CD8-positive, alpha-beta T cell (primary cell): ENCODE measurements at regions of chr7 and their contacts with region 1.

Region 1: DNA sequence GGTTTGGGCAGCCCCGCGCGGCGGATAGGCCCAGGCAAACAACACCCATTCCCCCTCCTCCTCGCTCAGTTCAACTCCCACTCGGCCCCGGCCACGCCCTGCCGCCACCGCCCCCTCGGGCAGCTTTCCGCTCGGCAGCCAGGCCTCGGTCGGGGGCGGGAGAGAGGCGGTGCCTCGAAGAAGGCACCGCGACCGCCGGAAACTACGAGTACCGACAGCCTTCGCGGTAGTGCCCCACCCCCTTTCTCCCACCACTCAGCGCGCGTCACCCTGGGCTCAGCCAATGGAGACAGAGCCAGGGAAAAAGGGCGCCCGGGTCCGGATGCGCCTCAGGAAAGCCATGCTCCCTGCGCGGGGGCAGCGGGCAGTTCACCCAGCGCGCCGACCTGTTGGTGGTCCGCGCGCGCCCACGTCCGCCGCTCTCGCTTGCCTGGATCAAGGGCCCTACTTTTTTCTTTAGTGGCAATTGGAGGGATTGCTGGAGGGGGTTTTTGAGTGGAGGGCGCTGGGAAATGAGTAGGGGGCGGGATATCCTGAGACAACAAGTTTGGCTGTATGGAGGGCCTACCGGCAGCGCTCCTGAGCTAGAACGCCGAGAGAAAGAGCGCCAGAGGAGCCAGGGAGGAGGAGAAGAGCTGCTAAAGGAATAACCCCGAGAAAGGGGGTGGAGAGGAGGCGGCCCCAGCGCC is 557 bp upstream of the SP4 start:
- DNase-seq: peak; percentile 99 to 100 (median 99)
- ATAC-seq: peak; percentile 76
- H3K4me3 ChIP-seq: peak overlapping the region; percentile 87 to 99
- H3K4me3 Mint-ChIP-seq: peak overlapping the region; percentile 96
- H3K27ac ChIP-seq: peak overlapping the region; percentile 96 to 97
- H3K27ac Mint-ChIP-seq: peak overlapping the region; percentile 98
- H3K4me1 ChIP-seq: peaks cover 42% of the 10 kb centered on the region
- H3K4me1 Mint-ChIP-seq: peaks cover 48% of the 10 kb centered on the region
- H3K27me3 ChIP-seq: no peaks in the 10 kb centered on the region
- H3K27me3 Mint-ChIP-seq: no peaks in the 10 kb centered on the region
- CTCF ChIP-seq: no peak

Region 2: DNA sequence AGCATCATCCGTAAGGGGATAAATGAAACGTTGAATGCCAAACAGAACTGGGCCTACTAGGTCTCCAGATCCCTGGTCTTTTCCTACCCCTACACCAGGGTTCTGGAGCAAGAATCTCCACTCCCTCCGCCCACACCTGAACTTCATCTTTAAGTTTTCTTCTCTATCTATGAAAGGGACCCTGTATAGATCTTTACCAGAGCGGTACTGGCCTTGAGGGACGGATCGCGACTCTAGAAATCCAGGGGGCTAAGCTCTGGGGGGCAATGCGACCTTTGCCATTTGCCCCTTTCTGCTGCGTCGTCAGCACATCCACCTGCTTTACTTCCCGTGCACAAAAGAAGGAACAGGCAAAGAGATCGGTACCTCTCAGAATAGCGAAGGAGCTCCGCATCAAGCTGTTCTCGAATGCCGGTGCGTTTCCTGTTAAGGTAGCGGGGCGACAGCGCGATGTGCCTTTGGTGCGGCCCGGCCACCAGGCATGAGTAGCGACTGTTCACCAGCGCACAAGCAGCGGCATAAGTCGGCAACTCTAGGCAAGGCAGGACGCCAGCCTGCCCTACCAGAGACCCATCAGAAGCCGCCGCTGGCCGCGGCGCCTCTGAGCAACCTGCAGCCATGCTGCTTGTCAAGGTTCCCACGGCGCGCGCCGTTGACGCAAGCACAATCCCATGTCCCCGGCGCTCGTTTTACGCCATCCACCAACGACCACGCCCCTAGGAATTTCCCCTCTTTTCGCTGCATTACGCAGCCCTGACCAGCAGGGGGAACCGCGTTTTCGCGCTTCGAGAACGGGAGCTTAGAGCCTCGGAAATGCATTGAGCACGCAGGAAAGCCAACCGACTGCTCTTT is 1718.7 kb before region 1 on chr7 and contains the start of gene POLR1F:
- CTCF ChIA-PET with region 1: no interaction called
- POLR2A ChIA-PET with region 1: no interaction called
- intact Hi-C with region 1: loop called in 1 of 2 experiments (anchors 10 kb)
- DNase-seq: peak; percentile 88 to 97 (median 93)
- ATAC-seq: peak; percentile 95
- H3K4me3 ChIP-seq: peak within 1 kb of the TSS; percentile 86 to 88
- H3K4me3 Mint-ChIP-seq: peak within 1 kb of the TSS; percentile 99
- H3K27ac ChIP-seq: peak within 1 kb of the TSS; percentile 82 to 90
- H3K27ac Mint-ChIP-seq: peak within 1 kb of the TSS; percentile 97
- H3K4me1 ChIP-seq: peaks cover 31% of the 10 kb centered on the region
- H3K4me1 Mint-ChIP-seq: peaks cover 56% of the 10 kb centered on the region
- H3K27me3 ChIP-seq: no peaks in the 10 kb centered on the region
- H3K27me3 Mint-ChIP-seq: no peaks in the 10 kb centered on the region
- CTCF ChIP-seq: peak; percentile 73
- total RNA-seq, gene POLR1F: 35.0 to 37.7 TPM

Region 3: DNA sequence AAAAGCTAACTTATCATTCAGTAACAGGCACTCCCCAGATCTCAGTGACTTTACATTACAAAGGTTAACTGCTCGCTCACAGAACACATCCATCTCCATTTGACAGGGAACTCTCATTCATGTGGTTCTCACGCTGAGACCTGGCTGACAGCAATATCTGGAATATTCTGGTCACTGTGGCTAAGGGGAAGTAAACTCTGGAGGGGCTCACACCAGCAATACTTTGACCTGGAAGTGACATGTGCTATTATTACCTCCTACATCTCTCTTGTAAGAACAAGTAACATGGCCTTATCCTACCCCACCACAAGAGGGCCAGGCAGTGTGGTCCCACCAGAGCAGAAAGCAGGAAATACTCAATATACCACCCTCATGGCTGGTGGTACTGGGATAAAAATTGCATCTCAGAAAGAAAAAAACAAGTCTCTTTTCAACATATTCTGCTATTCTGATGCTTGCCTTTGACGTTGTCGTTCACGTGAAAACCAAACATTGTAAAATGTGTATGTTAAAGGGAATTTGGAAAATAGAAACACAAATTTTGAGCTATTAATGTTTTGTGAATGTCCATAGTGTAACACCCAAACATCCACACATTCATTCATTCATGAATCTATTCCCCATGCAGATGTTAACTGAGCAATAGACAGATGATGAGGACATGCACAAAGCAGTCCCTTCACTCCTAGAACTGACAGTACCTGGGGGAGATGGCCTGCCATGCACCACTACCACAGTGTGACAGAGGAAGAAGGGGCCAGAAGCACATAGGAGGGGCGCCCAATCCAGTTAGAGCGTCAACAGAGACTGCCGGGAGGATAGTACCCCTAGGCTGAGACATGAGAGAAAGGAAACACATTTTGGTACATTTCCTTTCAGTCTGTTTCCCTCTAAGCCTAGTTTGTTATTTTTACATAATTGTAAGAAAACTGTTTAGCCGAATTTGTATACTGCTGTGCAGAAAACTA is 165.4 kb before region 1 on chr7:
- CTCF ChIA-PET with region 1: interaction called, 3 read pairs
- POLR2A ChIA-PET with region 1: interaction called, 8 read pairs
- intact Hi-C with region 1: loop called (anchors 2 to 5 kb)
- DNase-seq: peak; percentile 7 to 75 (median 52)
- ATAC-seq: peak; percentile 90
- H3K4me3 ChIP-seq: no peak overlapping the region
- H3K4me3 Mint-ChIP-seq: no peak overlapping the region
- H3K27ac ChIP-seq: no peak overlapping the region
- H3K27ac Mint-ChIP-seq: no peak overlapping the region
- H3K4me1 ChIP-seq: no peaks in the 10 kb centered on the region
- H3K4me1 Mint-ChIP-seq: peaks cover 10% of the 10 kb centered on the region
- H3K27me3 ChIP-seq: no peaks in the 10 kb centered on the region
- H3K27me3 Mint-ChIP-seq: peaks cover 7% of the 10 kb centered on the region
- CTCF ChIP-seq: peak; percentile 66

Region 4: GRCh38 chr7:21317966-21318915 is 109.1 kb before region 1 on chr7:
- CTCF ChIA-PET with region 1: no interaction called
- POLR2A ChIA-PET with region 1: no interaction called
- intact Hi-C with region 1: no loop called
- DNase-seq: no peak
- ATAC-seq: no peak
- H3K4me3 ChIP-seq: no peak overlapping the region
- H3K4me3 Mint-ChIP-seq: no peak overlapping the region
- H3K27ac ChIP-seq: no peak overlapping the region
- H3K27ac Mint-ChIP-seq: no peak overlapping the region
- H3K4me1 ChIP-seq: no peaks in the 10 kb centered on the region
- H3K4me1 Mint-ChIP-seq: peaks cover 3% of the 10 kb centered on the region
- H3K27me3 ChIP-seq: no peaks in the 10 kb centered on the region
- H3K27me3 Mint-ChIP-seq: no peaks in the 10 kb centered on the region
- CTCF ChIP-seq: no peak

Region 5: GRCh38 chr7:21352540-21353387 is 74.6 kb before region 1 on chr7:
- CTCF ChIA-PET with region 1: no interaction called
- POLR2A ChIA-PET with region 1: interaction called, 14 read pairs
- intact Hi-C with region 1: loop called (anchors 1 to 5 kb)
- DNase-seq: peak in 2 of 9 experiments; percentile 54 to 72
- ATAC-seq: peak; percentile 68
- H3K4me3 ChIP-seq: peak overlapping the region; percentile 18 to 19
- H3K4me3 Mint-ChIP-seq: peak overlapping the region; percentile 56
- H3K27ac ChIP-seq: peak overlapping the region; percentile 19 to 77
- H3K27ac Mint-ChIP-seq: peak overlapping the region; percentile 80
- H3K4me1 ChIP-seq: peaks cover 44% of the 10 kb centered on the region
- H3K4me1 Mint-ChIP-seq: peaks cover 55% of the 10 kb centered on the region
- H3K27me3 ChIP-seq: no peaks in the 10 kb centered on the region
- H3K27me3 Mint-ChIP-seq: no peaks in the 10 kb centered on the region
- CTCF ChIP-seq: no peak

Region 6: GRCh38 chr7:21448974-21449373 is 21.6 kb after region 1 on chr7:
- CTCF ChIA-PET with region 1: interaction called, 3 read pairs
- POLR2A ChIA-PET with region 1: interaction called, 3 read pairs
- intact Hi-C with region 1: loop called in 1 of 2 experiments (anchors 2 kb)
- DNase-seq: no peak
- ATAC-seq: no peak
- H3K4me3 ChIP-seq: no peak overlapping the region
- H3K4me3 Mint-ChIP-seq: no peak overlapping the region
- H3K27ac ChIP-seq: no peak overlapping the region
- H3K27ac Mint-ChIP-seq: no peak overlapping the region
- H3K4me1 ChIP-seq: peaks cover 19% of the 10 kb centered on the region
- H3K4me1 Mint-ChIP-seq: peaks cover 54% of the 10 kb centered on the region
- H3K27me3 ChIP-seq: no peaks in the 10 kb centered on the region
- H3K27me3 Mint-ChIP-seq: no peaks in the 10 kb centered on the region
- CTCF ChIP-seq: no peak

Region 7: DNA sequence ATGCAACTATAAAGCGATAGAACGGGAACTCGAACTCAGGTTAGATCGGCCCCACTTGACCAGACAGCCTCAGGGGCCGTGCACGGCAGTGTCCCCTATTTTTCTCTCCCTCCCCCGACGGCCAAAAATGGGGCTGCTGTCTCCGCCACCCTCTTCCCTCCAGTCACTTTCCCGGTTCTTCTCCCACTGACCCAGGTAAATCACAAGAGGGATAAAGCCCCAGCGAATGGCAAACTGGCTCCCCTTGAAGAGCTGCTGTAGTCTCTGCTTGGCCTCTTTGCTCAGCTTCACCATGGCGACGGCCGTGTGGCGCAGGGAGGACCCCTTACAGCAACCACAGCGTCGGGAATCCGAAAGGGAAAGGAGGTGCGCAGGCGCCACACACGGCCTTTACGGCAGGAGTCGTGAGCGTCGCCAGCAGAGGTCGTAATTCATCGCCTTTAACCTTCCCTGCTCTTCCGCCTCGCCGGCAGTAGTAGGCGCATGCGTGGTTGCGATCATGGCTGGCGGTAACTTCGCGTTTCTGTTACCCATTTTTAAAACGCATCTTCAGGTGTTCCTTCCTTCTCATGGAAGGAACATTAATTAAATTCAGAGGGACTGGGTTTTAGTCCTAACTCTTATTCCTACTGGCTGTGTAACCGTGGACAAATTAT is 1395.3 kb after region 1 on chr7 and contains the start of gene TOMM7:
- CTCF ChIA-PET with region 1: no interaction called
- POLR2A ChIA-PET with region 1: no interaction called
- intact Hi-C with region 1: loop called (anchors 2 to 5 kb)
- DNase-seq: peak; percentile 72 to 99 (median 86)
- ATAC-seq: peak; percentile 96
- H3K4me3 ChIP-seq: peak within 1 kb of the TSS; percentile 74 to 89
- H3K4me3 Mint-ChIP-seq: peak within 1 kb of the TSS; percentile 99
- H3K27ac ChIP-seq: peak within 1 kb of the TSS; percentile 85
- H3K27ac Mint-ChIP-seq: peak within 1 kb of the TSS; percentile 99
- H3K4me1 ChIP-seq: peaks cover 20% of the 10 kb centered on the region
- H3K4me1 Mint-ChIP-seq: peaks cover 41% of the 10 kb centered on the region
- H3K27me3 ChIP-seq: no peaks in the 10 kb centered on the region
- H3K27me3 Mint-ChIP-seq: peaks cover 4% of the 10 kb centered on the region
- CTCF ChIP-seq: no peak
- total RNA-seq, gene TOMM7: 595 to 610 TPM

Region 8: GRCh38 chr7:23105644-23106056 is 1678.3 kb after region 1 on chr7 and contains the start of gene KLHL7:
- CTCF ChIA-PET with region 1: no interaction called
- POLR2A ChIA-PET with region 1: no interaction called
- intact Hi-C with region 1: loop called in 1 of 2 experiments (anchors 10 kb)
- DNase-seq: peak; percentile 92 to 98 (median 96)
- ATAC-seq: peak; percentile 95
- H3K4me3 ChIP-seq: peak within 1 kb of the TSS; percentile 93 to 94
- H3K4me3 Mint-ChIP-seq: peak within 1 kb of the TSS; percentile 98
- H3K27ac ChIP-seq: peak within 1 kb of the TSS; percentile 97
- H3K27ac Mint-ChIP-seq: peak within 1 kb of the TSS; percentile 95
- H3K4me1 ChIP-seq: peaks cover 23% of the 10 kb centered on the region
- H3K4me1 Mint-ChIP-seq: peaks cover 49% of the 10 kb centered on the region
- H3K27me3 ChIP-seq: no peaks in the 10 kb centered on the region
- H3K27me3 Mint-ChIP-seq: no peaks in the 10 kb centered on the region
- CTCF ChIP-seq: no peak
- total RNA-seq, gene KLHL7: 19.2 to 20.2 TPM